Right cardiac atrium (tissue), 5 donors: ENCODE measurements at regions of chr9 and their contacts with region 1.

Region 1: GRCh38 chr9:121326130-121326838 is 43.8 kb downstream of the STOM start:
- DNase-seq: peak; percentile 94 to 96 (median 95)
- ATAC-seq: peak; percentile 90 to 91
- H3K4me3 ChIP-seq: no peak overlapping the region
- H3K27ac ChIP-seq: peak overlapping the region; percentile 94
- H3K4me1 ChIP-seq: peaks cover 14% of the 10 kb centered on the region
- H3K27me3 ChIP-seq: no peaks in the 10 kb centered on the region

Region 2: GRCh38 chr9:121369595-121370265 is 43.4 kb after region 1 on chr9 and contains the start of gene STOM:
- intact Hi-C with region 1: loop called in 3 of 4 experiments (anchors 2 to 5 kb)
- DNase-seq: peak; percentile 93 to 97 (median 96)
- ATAC-seq: peak; percentile 84 to 85
- H3K4me3 ChIP-seq: peak within 1 kb of the TSS; percentile 65
- H3K27ac ChIP-seq: peak within 1 kb of the TSS; percentile 86
- H3K4me1 ChIP-seq: peaks cover 3% of the 10 kb centered on the region
- H3K27me3 ChIP-seq: no peaks in the 10 kb centered on the region
- total RNA-seq, gene STOM: 146 to 246 (median 172) TPM

Region 3: DNA sequence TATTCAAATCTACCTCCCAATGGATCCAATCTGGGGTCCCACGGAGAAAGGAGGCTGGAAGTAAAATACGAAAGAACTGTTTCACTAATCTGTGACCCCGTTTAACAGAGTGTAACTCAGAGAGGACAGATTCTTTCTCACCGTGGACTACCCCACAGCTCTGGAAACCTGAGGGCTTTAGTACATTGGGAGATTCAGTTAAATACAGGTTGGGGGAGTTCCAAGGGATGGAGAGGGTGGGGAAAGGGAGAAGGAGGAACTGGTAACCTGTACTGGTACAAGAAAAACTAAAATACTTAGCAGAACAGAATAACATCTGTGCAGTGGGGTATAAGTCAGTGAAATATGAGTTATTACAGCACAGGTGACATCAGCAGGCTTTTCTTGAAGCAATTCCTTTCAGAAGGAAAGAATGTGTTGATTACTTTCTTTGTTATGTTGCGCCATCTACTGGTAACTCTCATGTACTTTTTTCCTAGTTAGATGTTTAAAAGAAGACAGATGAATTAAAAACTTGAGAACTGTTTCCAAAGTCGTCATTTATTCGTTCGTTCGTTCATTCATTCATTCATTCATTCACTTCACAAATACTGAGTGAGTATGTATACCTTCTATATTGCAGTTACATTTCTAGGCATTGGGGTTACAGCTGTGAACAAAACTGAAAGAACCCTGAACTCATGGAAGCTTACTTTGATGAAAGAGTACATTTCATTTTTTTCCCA is 73.8 kb after region 1 on chr9:
- intact Hi-C with region 1: loop called in 1 of 4 experiments (anchors 5 kb)
- DNase-seq: no peak
- ATAC-seq: peak; percentile 33 to 54
- H3K4me3 ChIP-seq: no peak overlapping the region
- H3K27ac ChIP-seq: no peak overlapping the region
- H3K4me1 ChIP-seq: no peaks in the 10 kb centered on the region
- H3K27me3 ChIP-seq: no peaks in the 10 kb centered on the region